Activated CD4-positive, alpha-beta memory T cell treated with anti-CD3 and anti-CD28 coated beads for 36 hours (primary cell): ENCODE measurements at regions of chr14 and their contacts with region 1.

Region 1: DNA sequence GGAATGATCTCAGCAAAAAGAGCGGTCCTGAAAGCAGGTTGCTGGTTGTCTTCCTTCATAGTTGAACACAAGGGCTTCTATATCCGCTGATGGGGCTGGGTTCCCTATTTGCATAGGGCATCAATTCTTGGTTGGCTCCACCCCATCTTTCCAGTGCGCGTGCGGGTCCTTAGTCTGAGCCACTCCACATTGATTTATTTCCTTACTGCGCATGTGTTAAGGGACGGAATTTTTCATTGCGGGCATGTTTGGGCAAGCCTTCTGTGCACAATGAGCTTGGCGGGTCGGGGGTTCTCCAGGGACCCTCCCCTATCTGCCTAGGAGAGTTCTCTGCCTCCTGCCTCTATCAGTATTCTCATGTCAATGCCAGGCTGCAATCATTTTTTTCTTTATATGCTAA is 21.2 kb upstream of the DLGAP5 start:
- DNase-seq: no peak
- H3K4me3 Mint-ChIP-seq: no peak overlapping the region
- H3K27ac Mint-ChIP-seq: no peak overlapping the region
- H3K4me1 Mint-ChIP-seq: peaks cover 2% of the 10 kb centered on the region
- H3K27me3 Mint-ChIP-seq: no peaks in the 10 kb centered on the region

Region 2: GRCh38 chr14:55094321-55095157 is 118.1 kb before region 1 on chr14:
- CTCF ChIA-PET with region 1: no interaction called
- POLR2A ChIA-PET with region 1: no interaction called
- intact Hi-C with region 1: loop called (anchors 1 kb)
- DNase-seq: no peak
- H3K4me3 Mint-ChIP-seq: no peak overlapping the region
- H3K27ac Mint-ChIP-seq: no peak overlapping the region
- H3K4me1 Mint-ChIP-seq: peaks cover 25% of the 10 kb centered on the region
- H3K27me3 Mint-ChIP-seq: no peaks in the 10 kb centered on the region

Region 3: DNA sequence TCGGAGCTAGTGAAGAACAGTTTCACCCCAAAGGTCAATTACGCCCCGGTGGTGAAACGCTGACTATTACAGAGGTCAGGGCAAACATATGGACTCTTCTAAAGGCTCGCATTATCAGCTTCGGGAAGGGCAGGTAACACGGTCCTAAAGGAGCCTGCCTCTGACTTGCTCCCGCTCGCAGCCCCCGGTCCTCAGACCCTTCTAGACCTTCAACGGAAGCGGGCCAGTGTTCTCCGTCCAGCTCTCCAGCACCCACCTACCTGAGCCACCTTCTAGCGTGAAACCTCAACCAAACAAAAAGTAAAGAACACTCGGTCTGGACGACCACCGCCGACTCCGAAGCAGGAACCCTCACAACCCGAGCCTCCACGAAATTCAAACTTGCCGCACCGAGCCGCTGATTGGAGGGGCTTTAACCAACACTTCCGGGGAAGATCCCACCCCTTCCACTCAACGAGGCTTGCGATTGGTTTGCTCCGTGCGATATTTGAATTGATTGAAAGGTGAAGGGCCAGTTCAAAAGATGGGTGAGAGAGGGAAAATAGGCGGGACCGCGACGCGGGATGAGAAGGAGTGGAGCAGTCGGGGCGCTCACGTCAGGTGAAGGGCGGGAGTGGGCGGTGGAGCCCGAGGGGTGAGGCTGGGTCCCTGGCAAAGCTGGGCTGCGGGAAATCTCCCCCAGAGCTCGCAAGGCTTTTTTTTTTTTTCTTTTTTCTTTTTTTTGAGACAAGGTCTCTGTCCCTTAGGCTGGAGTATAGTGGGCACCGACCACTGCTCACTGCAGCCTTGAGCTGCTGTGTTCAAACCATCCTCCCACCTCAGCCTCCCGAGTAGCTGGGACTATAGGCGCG is 21.2 kb before region 1 on chr14 and contains the start of gene DLGAP5:
- CTCF ChIA-PET with region 1: interaction called, 6 read pairs
- POLR2A ChIA-PET with region 1: no interaction called
- intact Hi-C with region 1: loop called (anchors 2 kb)
- DNase-seq: peak; percentile 96
- H3K4me3 Mint-ChIP-seq: peak within 1 kb of the TSS; percentile 89
- H3K27ac Mint-ChIP-seq: peak within 1 kb of the TSS; percentile 79
- H3K4me1 Mint-ChIP-seq: peaks cover 27% of the 10 kb centered on the region
- H3K27me3 Mint-ChIP-seq: no peaks in the 10 kb centered on the region
- total RNA-seq, gene DLGAP5: 92.7 to 97.9 TPM

Region 4: DNA sequence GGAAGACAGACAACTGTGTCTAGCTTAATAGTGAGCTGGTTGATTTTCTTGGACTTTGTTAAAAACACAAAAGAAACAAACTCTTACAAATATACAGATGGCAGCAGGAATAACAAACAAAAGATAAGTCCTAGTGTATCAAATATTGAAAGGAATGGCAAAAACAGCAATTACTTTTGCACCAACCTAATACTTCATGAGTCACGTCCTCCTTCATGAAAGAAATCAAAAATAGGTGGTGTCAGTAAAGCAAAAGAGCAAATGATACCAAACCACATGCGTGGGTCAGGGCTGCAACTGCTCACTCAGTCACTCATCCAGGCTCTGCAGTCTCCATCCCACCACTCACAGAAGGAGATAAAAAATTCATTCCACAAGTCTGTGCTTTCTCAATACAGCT is 187.2 kb after region 1 on chr14:
- CTCF ChIA-PET with region 1: no interaction called
- POLR2A ChIA-PET with region 1: no interaction called
- intact Hi-C with region 1: no loop called
- DNase-seq: no peak
- H3K4me3 Mint-ChIP-seq: no peak overlapping the region
- H3K27ac Mint-ChIP-seq: no peak overlapping the region
- H3K4me1 Mint-ChIP-seq: peaks cover 42% of the 10 kb centered on the region
- H3K27me3 Mint-ChIP-seq: no peaks in the 10 kb centered on the region

Region 5: DNA sequence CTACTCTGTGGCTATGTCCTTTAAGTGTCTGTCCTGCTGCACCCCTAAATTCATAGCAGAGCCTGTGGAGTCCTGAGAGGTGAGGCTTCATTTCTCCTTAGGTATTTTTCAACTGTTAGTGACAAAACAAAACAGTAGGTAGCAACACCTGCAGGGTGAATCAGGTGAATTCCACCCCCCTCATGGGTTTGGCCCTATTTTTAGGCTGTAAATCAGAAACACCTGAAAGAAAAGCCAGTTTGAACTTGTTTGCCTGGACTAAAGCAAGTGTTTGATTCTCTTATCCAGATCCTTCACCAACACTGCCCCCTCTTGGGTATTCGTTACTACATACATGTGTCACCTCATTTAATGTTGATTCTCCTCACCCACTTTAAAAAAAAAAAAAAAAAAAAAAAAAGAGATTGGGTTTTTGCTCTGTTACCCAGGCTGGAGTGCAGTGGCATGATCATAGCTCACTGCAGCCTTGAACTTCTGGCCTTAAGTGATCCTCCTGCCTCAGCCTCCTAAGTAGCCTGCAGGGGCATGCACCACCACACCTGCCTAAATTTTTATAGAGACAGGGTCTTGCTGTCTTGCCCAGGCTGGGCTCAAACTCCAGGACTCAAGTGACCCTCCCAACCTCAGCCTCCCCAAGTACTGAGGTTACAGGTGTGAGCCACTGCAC is 217.5 kb after region 1 on chr14:
- CTCF ChIA-PET with region 1: interaction called, 13 read pairs
- POLR2A ChIA-PET with region 1: no interaction called
- intact Hi-C with region 1: loop called (anchors 1 kb)
- DNase-seq: peak; percentile 24
- H3K4me3 Mint-ChIP-seq: no peak overlapping the region
- H3K27ac Mint-ChIP-seq: peak overlapping the region; percentile 20
- H3K4me1 Mint-ChIP-seq: peaks cover 28% of the 10 kb centered on the region
- H3K27me3 Mint-ChIP-seq: no peaks in the 10 kb centered on the region